Aorta (tissue), 5 donors: ENCODE measurements at regions of chr14 and their contacts with region 1.

Region 1: GRCh38 chr14:22852940-22853767 is 16.8 kb downstream of the MMP14 start:
- DNase-seq: peak; percentile 92 to 98
- ATAC-seq: peak; percentile 76
- H3K4me3 ChIP-seq: no peak overlapping the region
- H3K27ac ChIP-seq: no peak overlapping the region
- H3K4me1 ChIP-seq: no peaks in the 10 kb centered on the region
- H3K27me3 ChIP-seq: no peaks in the 10 kb centered on the region

Region 2: GRCh38 chr14:22653012-22653621 is 200.0 kb before region 1 on chr14:
- intact Hi-C with region 1: loop called in 1 of 2 experiments (anchors 10 kb)
- DNase-seq: peak in 1 of 2 donors; percentile 57
- ATAC-seq: peak; percentile 58
- H3K4me3 ChIP-seq: no peak overlapping the region
- H3K27ac ChIP-seq: no peak overlapping the region
- H3K4me1 ChIP-seq: no peaks in the 10 kb centered on the region
- H3K27me3 ChIP-seq: no peaks in the 10 kb centered on the region

Region 3: GRCh38 chr14:22822571-22823098 is 30.5 kb before region 1 on chr14:
- intact Hi-C with region 1: loop called (anchors 1 to 2 kb)
- DNase-seq: peak; percentile 92 to 94
- ATAC-seq: peak; percentile 89
- H3K4me3 ChIP-seq: peak overlapping the region; percentile 33 to 66
- H3K27ac ChIP-seq: peak overlapping the region in 1 of 2 donors; percentile 67
- H3K4me1 ChIP-seq: peaks cover 0 to 3% of the 10 kb centered on the region in 2 donors
- H3K27me3 ChIP-seq: no peaks in the 10 kb centered on the region

Region 4: DNA sequence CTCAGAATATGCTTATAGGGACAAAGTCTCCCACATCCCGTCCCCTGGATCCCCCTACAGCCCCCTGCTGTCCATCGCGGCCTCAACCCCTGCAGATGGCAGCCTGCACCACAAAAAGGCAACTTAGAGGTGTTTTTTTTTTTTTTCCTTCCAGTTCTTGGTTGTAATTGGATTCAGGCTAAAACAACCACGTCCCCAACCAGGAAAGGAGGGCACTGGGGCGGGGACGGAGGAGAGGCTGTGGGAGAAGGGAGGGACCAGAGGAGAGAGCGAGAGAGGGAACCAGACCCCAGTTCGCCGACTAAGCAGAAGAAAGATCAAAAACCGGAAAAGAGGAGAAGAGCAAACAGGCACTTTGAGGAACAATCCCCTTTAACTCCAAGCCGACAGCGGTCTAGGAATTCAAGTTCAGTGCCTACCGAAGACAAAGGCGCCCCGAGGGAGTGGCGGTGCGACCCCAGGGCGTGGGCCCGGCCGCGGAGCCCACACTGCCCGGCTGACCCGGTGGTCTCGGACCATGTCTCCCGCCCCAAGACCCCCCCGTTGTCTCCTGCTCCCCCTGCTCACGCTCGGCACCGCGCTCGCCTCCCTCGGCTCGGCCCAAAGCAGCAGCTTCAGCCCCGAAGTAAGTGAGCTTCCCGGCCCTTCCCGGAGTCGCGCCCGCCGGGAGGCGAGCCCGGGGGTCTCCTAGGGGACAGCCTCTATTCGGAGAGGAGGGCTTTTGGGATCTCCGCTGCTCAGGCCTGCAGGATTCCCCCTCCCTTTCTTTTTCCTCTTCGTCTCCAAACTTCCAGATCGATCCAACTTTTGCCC is 16.6 kb before region 1 on chr14 and contains the start of gene MMP14:
- intact Hi-C with region 1: loop called (anchors 1 to 2 kb)
- DNase-seq: peak; percentile 90 to 93
- ATAC-seq: peak; percentile 90
- H3K4me3 ChIP-seq: peak within 1 kb of the TSS; percentile 88 to 92
- H3K27ac ChIP-seq: peak within 1 kb of the TSS; percentile 83 to 99
- H3K4me1 ChIP-seq: no peaks in the 10 kb centered on the region
- H3K27me3 ChIP-seq: no peaks in the 10 kb centered on the region
- total RNA-seq, gene MMP14: 206 to 250 TPM